Activated naive CD4-positive, alpha-beta T cell treated with anti-CD3 and anti-CD28 coated beads for 36 hours (primary cell): ENCODE measurements at regions of chr2 and their contacts with region 1.

Region 1: DNA sequence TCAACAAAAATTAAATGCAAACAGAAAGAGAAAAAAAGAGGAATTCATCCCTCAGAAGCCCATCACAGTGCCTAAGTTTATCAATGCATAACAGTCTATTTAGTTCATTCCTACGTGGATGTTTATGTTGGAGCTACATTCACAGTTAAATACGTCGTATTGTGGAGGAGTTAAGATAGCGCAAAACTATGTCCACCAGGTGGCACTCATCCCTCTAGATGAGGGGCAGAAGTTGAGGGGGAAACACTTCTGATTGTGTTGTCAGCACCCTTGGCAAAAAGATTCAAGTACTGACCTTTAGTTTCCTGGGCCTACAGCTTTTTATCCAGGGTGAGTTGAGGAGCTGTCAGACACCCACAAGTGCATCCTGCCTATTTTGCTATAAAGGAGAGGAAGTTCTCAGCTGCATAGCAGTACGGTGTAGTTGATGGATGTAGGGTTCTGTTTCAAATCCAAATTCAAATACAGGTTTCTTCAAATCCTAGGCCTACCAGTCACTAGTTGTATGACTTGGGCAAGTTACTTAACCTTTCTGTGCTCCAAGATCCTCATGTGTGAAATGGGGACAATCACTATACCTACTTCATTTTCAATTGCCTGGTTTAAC is 26.8 kb upstream of the MYO1B start:
- DNase-seq: peak; percentile 67
- H3K4me3 Mint-ChIP-seq: no peak overlapping the region
- H3K27ac Mint-ChIP-seq: no peak overlapping the region
- H3K4me1 Mint-ChIP-seq: peaks cover 25% of the 10 kb centered on the region
- H3K27me3 Mint-ChIP-seq: no peaks in the 10 kb centered on the region

Region 2: GRCh38 chr2:191171708-191172355 is 46.6 kb before region 1 on chr2:
- CTCF ChIA-PET with region 1: interaction called, 6 read pairs
- intact Hi-C with region 1: loop called (anchors 1 kb)
- DNase-seq: no peak
- H3K4me3 Mint-ChIP-seq: no peak overlapping the region
- H3K27ac Mint-ChIP-seq: peak overlapping the region; percentile 38
- H3K4me1 Mint-ChIP-seq: peaks cover 75% of the 10 kb centered on the region
- H3K27me3 Mint-ChIP-seq: no peaks in the 10 kb centered on the region

Region 3: GRCh38 chr2:191204433-191204832 is 14.0 kb before region 1 on chr2:
- CTCF ChIA-PET with region 1: interaction called, 11 read pairs
- intact Hi-C with region 1: loop called (anchors 1 kb)
- DNase-seq: no peak
- H3K4me3 Mint-ChIP-seq: peak overlapping the region; percentile 59
- H3K27ac Mint-ChIP-seq: peak overlapping the region; percentile 65
- H3K4me1 Mint-ChIP-seq: peaks cover 50% of the 10 kb centered on the region
- H3K27me3 Mint-ChIP-seq: no peaks in the 10 kb centered on the region

Region 4: DNA sequence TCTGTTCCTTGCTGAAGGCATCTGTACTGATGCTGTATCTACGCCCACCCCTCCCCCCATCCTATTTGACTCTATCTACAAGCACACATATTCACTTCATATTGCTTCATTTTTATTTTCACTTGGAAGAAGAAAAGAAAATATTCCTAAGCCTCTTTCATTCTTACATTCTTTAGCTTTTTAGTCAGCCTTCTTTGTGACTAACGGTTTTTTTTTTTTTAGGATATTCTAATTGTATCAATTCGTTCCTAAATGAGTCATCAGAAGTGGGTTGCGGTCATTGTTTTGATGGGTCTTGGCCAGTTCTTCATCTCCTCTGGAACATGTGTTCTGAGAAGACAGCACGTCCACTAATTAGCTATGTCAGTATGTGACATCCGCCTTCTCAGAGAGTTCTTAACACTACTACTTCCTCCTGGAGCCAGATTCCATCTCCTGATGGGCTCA is 115.5 kb after region 1 on chr2:
- CTCF ChIA-PET with region 1: no interaction called
- intact Hi-C with region 1: no loop called
- DNase-seq: no peak
- H3K4me3 Mint-ChIP-seq: no peak overlapping the region
- H3K27ac Mint-ChIP-seq: no peak overlapping the region
- H3K4me1 Mint-ChIP-seq: no peaks in the 10 kb centered on the region
- H3K27me3 Mint-ChIP-seq: no peaks in the 10 kb centered on the region

Region 5: GRCh38 chr2:191501561-191502168 is 283.3 kb after region 1 on chr2:
- CTCF ChIA-PET with region 1: no interaction called
- intact Hi-C with region 1: loop called (anchors 2 kb)
- DNase-seq: no peak
- H3K4me3 Mint-ChIP-seq: no peak overlapping the region
- H3K27ac Mint-ChIP-seq: no peak overlapping the region
- H3K4me1 Mint-ChIP-seq: no peaks in the 10 kb centered on the region
- H3K27me3 Mint-ChIP-seq: peaks cover 3% of the 10 kb centered on the region